Heart right ventricle (tissue), 16 donors: ENCODE measurements at regions of chr5 and their contacts with region 1.

Region 1: DNA sequence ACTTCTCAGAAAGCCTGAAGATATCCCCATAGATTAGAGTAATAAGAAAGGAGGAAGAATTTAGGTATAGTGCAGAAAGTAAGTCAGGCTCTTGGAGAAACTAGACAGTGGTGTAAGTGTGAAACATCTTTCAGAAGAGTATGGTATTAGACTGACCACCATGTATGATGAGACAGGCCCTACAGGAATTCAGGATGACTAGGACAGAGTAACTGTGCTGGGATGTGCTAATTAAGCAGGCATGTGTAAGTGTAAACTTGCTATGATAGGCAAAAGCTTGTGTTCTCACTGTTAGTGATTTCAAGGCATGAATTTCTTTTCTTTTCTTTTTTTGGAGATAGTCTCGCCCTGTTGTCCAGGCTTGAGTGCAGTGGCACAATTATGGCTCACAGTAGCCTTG is 70.8 kb downstream of the RAB24 start:
- DNase-seq: no peak
- ATAC-seq: peak in 3 of 8 donors; percentile 31 to 49 (median 46)
- H3K4me3 ChIP-seq: no peak overlapping the region
- H3K27ac ChIP-seq: peak overlapping the region in 1 of 10 donors; percentile 33
- H3K4me1 ChIP-seq: peaks cover 0 to 42% (median 23%) of the 10 kb centered on the region in 9 donors
- H3K27me3 ChIP-seq: no peaks in the 10 kb centered on the region
- CTCF ChIP-seq: no peak

Region 2: DNA sequence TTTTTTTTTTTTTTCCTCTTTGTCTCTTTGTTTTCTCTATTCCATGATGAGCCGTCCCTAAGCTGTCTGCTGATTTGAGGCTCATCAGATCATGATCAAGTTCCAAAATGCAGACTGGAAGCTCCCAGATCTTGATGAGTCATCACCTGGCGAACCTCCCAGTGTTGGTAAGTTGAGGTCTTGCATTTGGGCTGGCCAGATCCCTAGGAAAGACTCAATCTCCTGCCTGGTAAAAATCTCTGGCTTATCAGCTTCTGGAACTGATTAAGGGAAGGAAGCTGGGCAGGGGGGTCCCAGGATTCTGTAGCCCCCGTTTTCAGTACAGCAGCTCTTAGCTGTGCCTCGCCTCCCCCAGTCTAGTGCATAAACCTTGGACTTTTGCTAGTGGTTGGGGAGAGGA is 516.4 kb before region 1 on chr5:
- intact Hi-C with region 1: no loop called
- DNase-seq: no peak
- ATAC-seq: no peak
- H3K4me3 ChIP-seq: no peak overlapping the region
- H3K27ac ChIP-seq: no peak overlapping the region
- H3K4me1 ChIP-seq: no peaks in the 10 kb centered on the region
- H3K27me3 ChIP-seq: peaks cover 0 to 88% (median 66%) of the 10 kb centered on the region in 7 donors
- CTCF ChIP-seq: no peak

Region 3: DNA sequence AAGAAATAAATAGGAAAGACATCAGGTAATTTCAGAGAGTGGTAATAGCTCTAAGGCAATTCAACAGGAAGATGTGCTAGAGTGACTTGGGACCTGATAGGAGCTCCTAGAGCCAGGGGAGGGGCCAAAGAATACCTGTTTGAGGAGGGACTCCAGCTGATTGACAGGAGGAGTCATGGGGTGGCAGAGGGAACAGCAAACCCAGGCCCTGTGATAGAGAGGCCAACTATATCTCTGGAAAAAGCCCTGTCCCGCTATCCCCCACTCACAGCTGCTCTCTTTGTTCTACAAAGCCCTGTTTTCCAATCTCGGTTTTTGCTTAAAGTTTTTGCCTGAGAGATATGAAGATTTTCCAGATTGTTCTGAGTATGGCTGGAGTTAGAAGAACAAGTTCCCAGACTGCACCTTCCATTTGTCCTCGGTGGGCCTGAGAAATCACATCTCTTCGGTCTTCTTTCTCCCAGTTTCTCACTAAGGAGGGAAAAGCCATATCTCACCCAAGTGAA is 108.2 kb before region 1 on chr5:
- intact Hi-C with region 1: loop called in 3 of 10 experiments (anchors 10 kb)
- DNase-seq: no peak
- ATAC-seq: no peak
- H3K4me3 ChIP-seq: no peak overlapping the region
- H3K27ac ChIP-seq: no peak overlapping the region
- H3K4me1 ChIP-seq: peaks cover 0 to 16% (median 0%) of the 10 kb centered on the region in 9 donors
- H3K27me3 ChIP-seq: no peaks in the 10 kb centered on the region
- CTCF ChIP-seq: no peak

Region 4: DNA sequence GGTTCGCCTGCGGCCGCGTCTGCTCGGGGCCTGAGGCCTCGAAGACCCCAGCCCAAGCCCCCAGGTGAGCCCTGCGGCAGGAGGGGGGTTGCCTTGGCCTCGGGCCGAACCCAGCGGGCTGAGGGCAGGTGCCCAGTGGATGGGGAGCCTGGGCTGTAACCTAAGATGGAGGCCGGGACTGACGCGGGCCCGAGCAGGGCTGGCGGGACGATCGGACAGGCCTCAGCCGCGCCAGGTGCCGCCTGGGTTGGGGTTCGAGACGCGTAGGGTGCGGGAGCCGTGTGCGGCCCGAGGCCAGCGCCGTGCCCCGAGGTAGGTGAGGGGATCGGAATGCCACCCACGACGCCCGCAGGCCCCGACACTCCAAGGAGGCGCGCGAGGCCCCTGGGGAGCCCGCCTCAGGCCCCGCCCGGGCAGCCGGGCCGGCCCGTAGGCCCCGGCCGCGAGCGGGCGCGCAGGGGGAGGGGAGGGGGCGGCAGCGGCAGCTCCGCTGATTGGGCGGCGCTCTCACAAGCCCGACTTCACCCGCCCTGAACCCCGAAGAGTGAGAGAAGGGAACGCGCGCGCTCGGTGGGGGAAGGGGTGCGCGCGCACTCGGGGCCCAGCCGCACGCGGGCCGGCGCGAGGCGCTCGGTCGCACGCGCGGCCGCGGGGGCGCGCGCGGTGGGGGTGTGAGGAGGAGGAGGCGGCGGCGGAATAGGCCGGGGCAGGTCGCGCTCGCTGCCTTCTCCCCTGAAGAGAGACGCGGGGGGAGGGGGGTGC is 99.5 kb before region 1 on chr5 and contains the start of gene NSD1:
- intact Hi-C with region 1: loop called in 2 of 10 experiments (anchors 1 to 10 kb)
- DNase-seq: peak; percentile 87 to 90
- ATAC-seq: peak; percentile 78 to 85 (median 84)
- H3K4me3 ChIP-seq: peak within 1 kb of the TSS; percentile 65 to 90 (median 74)
- H3K27ac ChIP-seq: peak within 1 kb of the TSS; percentile 85 to 98 (median 94)
- H3K4me1 ChIP-seq: peaks cover 20 to 67% (median 46%) of the 10 kb centered on the region in 9 donors
- H3K27me3 ChIP-seq: no peaks in the 10 kb centered on the region
- CTCF ChIP-seq: no peak
- total RNA-seq, gene NSD1: 34.4 to 62.9 (median 47.2) TPM